ENCODE measurements at regions of chr1 and their contacts with region 1.

Region 1: DNA sequence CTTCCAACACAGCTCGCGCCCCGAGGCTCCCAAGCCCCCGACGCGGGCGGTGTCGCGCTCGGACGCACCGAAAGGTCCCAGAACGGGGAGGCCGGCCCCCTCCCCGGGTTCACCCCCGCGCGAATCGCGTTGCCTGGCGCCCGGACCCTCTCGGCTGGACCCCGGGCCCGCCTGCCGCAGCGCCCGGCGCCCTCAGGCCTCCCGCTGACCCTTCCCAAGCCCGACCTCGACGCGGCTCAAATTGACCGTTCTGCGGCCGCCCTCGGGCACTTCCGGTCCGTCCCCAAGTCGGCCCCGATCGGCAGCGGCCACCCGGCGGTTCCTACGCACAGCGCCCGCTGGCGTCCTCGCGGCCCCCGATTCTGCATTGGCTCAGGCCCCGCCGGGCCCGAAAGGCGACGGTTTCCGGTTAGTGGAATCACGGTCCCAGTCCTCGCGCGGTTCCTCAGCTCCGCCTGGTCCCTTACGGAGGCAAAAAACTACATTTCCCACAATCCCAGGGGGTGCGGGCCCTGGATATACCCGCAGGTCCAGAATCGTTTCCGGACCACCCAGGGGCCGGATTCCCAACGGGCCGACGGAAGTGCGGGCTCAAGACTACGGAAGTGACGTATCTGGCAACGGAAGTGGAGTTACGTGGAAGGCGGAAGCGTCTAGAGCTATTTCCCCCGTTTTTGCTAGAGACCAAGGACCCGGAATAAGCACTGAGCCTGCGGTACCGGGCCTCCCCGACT is at the start of gene AURKAIP1:
- DNase-seq: peak; percentile 97
- H3K4me3 Mint-ChIP-seq: peak within 1 kb of the TSS; percentile 93
- H3K27ac Mint-ChIP-seq: peak within 1 kb of the TSS; percentile 98
- H3K4me1 Mint-ChIP-seq: peaks cover 11% of the 10 kb centered on the region
- H3K27me3 Mint-ChIP-seq: peaks cover 2% of the 10 kb centered on the region
- total RNA-seq, gene AURKAIP1: 147 and 148 TPM in 2 replicates

Region 2: DNA sequence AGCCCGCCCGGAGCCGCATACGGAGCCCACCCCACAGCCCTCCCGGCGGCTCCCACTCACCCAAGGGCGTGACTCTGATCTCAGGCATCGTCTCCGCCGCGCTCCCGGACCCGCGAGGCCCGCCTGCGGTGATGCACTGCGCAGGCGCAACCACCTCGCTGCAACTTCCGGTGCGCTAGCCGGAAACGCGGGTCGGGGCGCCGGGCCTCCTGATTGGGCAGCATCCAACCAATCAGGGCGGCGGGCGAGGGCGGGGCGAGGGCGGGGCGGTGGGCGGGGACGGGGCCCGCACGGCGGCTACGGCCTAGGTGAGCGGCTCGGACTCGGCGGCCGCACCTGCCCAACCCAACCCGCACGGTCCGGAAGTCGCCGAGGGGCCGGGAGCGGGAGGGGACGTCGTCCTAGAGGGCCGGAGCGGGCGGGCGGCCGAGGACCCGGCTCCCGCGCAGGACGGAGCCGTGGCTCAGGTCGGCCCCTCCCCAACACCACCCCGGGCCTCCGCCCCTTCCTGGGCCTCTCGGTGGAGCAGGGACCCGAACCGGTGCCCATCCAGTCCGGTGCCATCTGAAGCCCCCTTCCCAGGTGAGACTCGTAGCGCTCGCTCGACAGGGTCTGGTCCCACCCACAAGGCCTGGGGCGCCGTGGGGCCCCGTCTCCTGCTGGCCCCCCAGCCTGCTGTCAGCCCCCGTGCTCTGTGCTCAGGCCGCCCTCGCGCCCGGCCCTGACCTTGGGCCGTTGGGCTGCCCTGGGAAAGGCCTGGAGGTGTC is 50.4 kb before region 1 on chr1 and contains the starts of genes CPTP and INTS11:
- intact Hi-C with region 1: loop called (anchors 1 kb)
- DNase-seq: peak; percentile 95
- H3K4me3 Mint-ChIP-seq: peak within 1 kb of the TSS; percentile 95
- H3K27ac Mint-ChIP-seq: peak within 1 kb of the TSS; percentile 92
- H3K4me1 Mint-ChIP-seq: peaks cover 20% of the 10 kb centered on the region
- H3K27me3 Mint-ChIP-seq: no peaks in the 10 kb centered on the region
- total RNA-seq, gene CPTP: 13.6 and 14.6 TPM in 2 replicates
- total RNA-seq, gene INTS11: 144 and 147 TPM in 2 replicates

Region 3: DNA sequence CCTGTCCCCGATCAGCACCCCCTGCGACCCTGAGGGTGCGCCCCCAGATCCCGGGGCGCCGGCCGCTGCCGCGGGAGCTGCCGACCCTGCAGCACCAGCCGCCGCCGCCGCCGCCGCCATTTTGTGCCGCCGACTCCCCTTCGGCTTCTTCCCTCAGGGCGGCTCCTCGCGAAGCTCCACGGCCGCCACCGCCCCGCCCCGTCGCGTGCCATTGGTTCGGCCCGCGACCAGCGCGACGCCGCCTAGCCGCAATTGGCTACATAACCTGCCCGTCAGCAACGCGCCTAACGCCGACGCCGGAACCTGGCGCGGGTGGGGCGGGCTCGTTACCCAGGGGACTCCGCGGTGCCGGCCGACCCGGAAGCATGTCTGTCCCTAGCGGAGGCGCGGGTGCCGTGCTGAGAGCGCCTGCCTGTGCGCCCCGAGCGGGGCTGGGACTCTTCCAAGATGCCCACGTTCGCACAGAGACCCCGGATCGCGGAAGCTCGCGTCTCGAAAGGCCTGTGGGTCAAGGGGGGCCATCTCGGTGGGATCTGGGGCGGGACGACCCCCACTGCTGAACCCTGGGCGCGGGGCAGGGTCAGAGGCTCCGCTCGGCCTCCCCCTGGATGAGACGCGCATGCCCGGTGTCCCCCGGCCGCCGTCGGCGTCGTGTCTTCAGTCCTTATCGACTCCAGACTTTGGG is 24.2 kb after region 1 on chr1 and contains the start of gene CCNL2:
- intact Hi-C with region 1: loop called (anchors 1 kb)
- DNase-seq: peak; percentile 99
- H3K4me3 Mint-ChIP-seq: peak within 1 kb of the TSS; percentile 95
- H3K27ac Mint-ChIP-seq: peak within 1 kb of the TSS; percentile 76
- H3K4me1 Mint-ChIP-seq: peaks cover 37% of the 10 kb centered on the region
- H3K27me3 Mint-ChIP-seq: no peaks in the 10 kb centered on the region
- total RNA-seq, gene CCNL2: 138 and 139 TPM in 2 replicates

Region 4: DNA sequence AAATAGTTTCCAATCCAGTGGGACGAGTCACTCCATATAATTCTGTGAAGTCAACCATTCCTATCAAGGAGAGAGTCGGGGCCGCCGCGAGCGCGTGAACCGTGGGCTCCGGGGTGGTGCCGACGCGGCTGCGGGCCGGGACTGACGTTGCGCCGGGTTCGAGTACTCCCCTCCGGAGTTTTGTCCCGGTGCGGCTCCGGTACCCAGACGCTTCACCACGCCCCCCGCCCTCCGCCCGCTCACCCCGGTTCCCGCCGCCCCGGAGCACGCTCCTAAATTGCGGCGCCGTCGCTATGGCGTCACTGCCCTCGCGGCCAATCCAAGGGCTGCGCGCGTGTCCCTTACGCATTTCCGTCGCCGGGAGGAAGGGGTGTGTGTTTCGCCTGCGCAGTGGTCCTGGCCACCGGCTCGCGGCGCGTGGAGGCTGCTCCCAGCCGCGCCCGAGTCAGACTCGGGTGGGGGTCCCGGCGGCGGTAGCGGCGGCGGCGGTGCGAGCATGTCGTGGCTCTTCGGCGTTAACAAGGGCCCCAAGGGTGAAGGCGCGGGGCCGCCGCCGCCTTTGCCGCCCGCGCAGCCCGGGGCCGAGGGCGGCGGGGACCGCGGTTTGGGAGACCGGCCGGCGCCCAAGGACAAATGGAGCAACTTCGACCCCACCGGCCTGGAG is 96.4 kb after region 1 on chr1 and contains the start of gene ATAD3B:
- intact Hi-C with region 1: loop called (anchors 1 kb)
- DNase-seq: peak; percentile 92
- H3K4me3 Mint-ChIP-seq: peak within 1 kb of the TSS; percentile 88
- H3K27ac Mint-ChIP-seq: peak within 1 kb of the TSS; percentile 86
- H3K4me1 Mint-ChIP-seq: peaks cover 10% of the 10 kb centered on the region
- H3K27me3 Mint-ChIP-seq: no peaks in the 10 kb centered on the region
- total RNA-seq, gene ATAD3B: 106 and 113 TPM in 2 replicates

Region 5: DNA sequence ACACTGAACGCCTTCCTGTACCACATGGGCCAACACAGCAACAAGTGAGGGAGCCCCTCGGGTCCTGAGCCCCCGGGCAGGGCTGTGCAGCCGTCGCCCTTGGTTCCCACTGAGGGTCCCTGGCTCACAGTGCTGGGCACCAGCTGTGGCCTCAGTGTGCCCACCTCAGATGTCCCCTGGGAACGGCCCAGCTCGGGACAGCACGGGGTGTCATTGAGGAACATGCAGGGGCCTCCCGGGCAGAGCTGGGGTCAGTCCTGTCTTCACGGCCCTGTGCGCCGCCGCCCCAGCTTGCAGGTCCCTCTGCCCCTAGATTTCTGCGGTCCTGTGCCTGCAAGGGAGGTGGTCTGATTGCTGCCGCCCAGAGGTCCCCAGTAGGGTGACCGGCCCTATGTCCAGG is 114.1 kb after region 1 on chr1:
- intact Hi-C with region 1: no loop called
- DNase-seq: no peak
- H3K4me3 Mint-ChIP-seq: no peak overlapping the region
- H3K27ac Mint-ChIP-seq: no peak overlapping the region
- H3K4me1 Mint-ChIP-seq: no peaks in the 10 kb centered on the region
- H3K27me3 Mint-ChIP-seq: no peaks in the 10 kb centered on the region

Region 6: GRCh38 chr1:1615256-1616044 is 240.4 kb after region 1 on chr1 and contains the start of gene MIB2:
- intact Hi-C with region 1: loop called (anchors 1 kb)
- DNase-seq: peak; percentile 98
- H3K4me3 Mint-ChIP-seq: peak within 1 kb of the TSS; percentile 92
- H3K27ac Mint-ChIP-seq: peak within 1 kb of the TSS; percentile 99
- H3K4me1 Mint-ChIP-seq: peaks cover 25% of the 10 kb centered on the region
- H3K27me3 Mint-ChIP-seq: no peaks in the 10 kb centered on the region
- total RNA-seq, gene MIB2: 29.5 and 32.8 TPM in 2 replicates

Measured in activated T-helper 1 cell treated with anti-CD3 and anti-CD28 coated beads, Interleukin-12 subunit alpha, Interleukin-12 subunit beta, Interleukin-2, Interleukin-4 antibody, amounts not matched to agents 30 ng/mL and 10 ng/mL and 1 ng/mL, durations not matched to agents 14 hours and 24 hours and 36 hours (primary cell).